CD4-positive, alpha-beta memory T cell (primary cell): ENCODE measurements at regions of chr5 and their contacts with region 1.

Region 1: DNA sequence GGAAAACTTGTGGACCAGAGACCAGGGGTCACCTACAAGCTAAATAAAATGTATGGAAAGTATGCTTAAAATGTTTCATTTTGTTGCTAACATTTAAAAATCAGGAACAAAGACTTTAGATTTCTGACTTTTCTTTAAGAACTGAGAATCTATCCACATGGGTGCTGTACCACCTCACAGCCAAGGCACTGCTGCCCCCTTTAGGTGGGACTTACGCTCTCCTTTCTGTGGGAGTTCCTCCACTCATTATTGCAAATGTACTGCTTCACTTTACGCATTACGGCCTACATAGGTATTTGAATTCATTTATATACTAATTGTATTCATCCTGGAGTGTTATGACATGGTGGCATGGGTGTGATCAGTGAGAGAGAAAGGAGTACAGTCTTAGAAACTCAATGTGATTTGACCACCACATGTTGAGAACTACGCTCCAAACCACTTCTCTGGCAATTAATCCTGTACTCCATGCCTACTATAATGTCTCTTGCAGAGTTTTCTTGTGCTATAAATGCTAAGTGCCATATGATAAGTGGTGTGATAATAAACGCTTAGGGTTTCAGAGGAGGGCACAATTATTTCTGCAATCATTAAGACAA is 24.7 kb upstream of the CETN3 start:
- DNase-seq: peak in 4 of 5 donors; percentile 19 to 26 (median 22)
- H3K4me3 ChIP-seq: no peak overlapping the region
- H3K4me3 Mint-ChIP-seq: no peak overlapping the region
- H3K27ac ChIP-seq: no peak overlapping the region
- H3K27ac Mint-ChIP-seq: no peak overlapping the region
- H3K4me1 ChIP-seq: no peaks in the 10 kb centered on the region
- H3K4me1 Mint-ChIP-seq: no peaks in the 10 kb centered on the region
- H3K27me3 ChIP-seq: no peaks in the 10 kb centered on the region
- H3K27me3 Mint-ChIP-seq: peaks cover 7% of the 10 kb centered on the region in 2 donors

Region 2: DNA sequence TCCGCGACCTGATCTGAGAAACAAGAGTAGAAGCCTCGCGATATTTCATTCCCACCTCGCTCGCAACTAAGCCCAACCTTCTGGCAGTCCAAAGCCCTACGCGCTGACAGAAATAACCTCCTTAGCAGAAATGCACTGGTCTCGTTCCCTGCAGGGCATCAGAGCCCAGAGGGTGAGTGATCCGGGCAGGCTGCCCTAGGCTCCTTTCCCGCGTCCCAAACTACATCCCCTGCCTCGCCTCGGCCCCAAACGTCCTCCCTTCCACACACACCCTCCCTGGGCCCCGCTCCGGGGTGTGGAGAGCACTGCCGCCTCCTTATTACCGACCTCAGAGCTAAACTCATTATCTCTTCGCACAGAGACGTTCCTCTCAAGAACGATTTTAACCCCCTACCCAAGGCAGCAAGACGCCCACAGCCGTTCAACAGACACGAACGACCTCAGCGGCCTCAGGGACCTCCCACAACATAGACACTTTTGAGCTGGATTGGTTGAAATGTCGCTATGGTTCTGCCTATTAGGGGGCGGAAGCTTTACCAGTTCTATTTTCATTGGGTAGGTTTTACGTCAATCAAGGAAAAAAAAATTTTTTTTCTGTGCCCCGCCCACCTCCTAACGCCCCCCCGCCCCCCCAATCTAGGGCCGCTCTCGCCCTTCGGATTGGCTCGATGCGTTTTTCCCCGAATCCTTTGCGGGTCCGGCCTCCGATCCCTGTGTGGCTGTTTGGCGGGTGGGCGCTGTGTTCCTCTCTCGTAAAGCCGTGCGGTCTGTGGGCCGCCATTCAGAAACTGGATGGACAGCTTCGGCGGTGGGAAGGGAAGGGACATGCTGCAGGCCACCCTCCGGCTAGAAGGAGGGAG is 24.7 kb before region 1 on chr5 and contains the start of gene CETN3:
- CTCF ChIA-PET with region 1: interaction called, 6 read pairs
- POLR2A ChIA-PET with region 1: interaction called, 7 read pairs
- intact Hi-C with region 1: loop called (anchors 1 kb)
- DNase-seq: peak; percentile 89 to 91 (median 91)
- H3K4me3 ChIP-seq: peak within 1 kb of the TSS; percentile 90 to 99
- H3K4me3 Mint-ChIP-seq: no peak within 1 kb of the TSS
- H3K27ac ChIP-seq: peak within 1 kb of the TSS; percentile 89
- H3K27ac Mint-ChIP-seq: no peak within 1 kb of the TSS
- H3K4me1 ChIP-seq: peaks cover 20% of the 10 kb centered on the region
- H3K4me1 Mint-ChIP-seq: peaks cover 11 to 17% (median 12%) of the 10 kb centered on the region in 4 donors
- H3K27me3 ChIP-seq: no peaks in the 10 kb centered on the region
- H3K27me3 Mint-ChIP-seq: no peaks in the 10 kb centered on the region
- total RNA-seq, gene CETN3: 15.9 to 22.1 TPM

Region 3: GRCh38 chr5:90474235-90475109 is 40.3 kb after region 1 on chr5 and contains the starts of genes MBLAC2 and POLR3G:
- CTCF ChIA-PET with region 1: interaction called, 33 read pairs
- POLR2A ChIA-PET with region 1: no interaction called
- intact Hi-C with region 1: loop called (anchors 2 kb)
- DNase-seq: peak; percentile 91 to 93 (median 92)
- H3K4me3 ChIP-seq: peak within 1 kb of the TSS; percentile 79 to 87
- H3K4me3 Mint-ChIP-seq: peak within 1 kb of the TSS; percentile 95 to 99 (median 99)
- H3K27ac ChIP-seq: peak within 1 kb of the TSS; percentile 66
- H3K27ac Mint-ChIP-seq: peak within 1 kb of the TSS; percentile 84 to 98 (median 95)
- H3K4me1 ChIP-seq: peaks cover 35% of the 10 kb centered on the region
- H3K4me1 Mint-ChIP-seq: peaks cover 24 to 46% (median 35%) of the 10 kb centered on the region in 4 donors
- H3K27me3 ChIP-seq: no peaks in the 10 kb centered on the region
- H3K27me3 Mint-ChIP-seq: no peaks in the 10 kb centered on the region
- total RNA-seq, gene MBLAC2: 14.7 to 16.1 TPM
- total RNA-seq, gene POLR3G: 1.2 to 1.5 TPM

Region 4: GRCh38 chr5:90529194-90529938 is 95.2 kb after region 1 on chr5 and contains the start of gene LYSMD3:
- CTCF ChIA-PET with region 1: interaction called, 89 read pairs
- POLR2A ChIA-PET with region 1: interaction called, 8 read pairs
- intact Hi-C with region 1: loop called (anchors 1 kb)
- DNase-seq: peak; percentile 95 to 97 (median 96)
- H3K4me3 ChIP-seq: peak within 1 kb of the TSS; percentile 83 to 93
- H3K4me3 Mint-ChIP-seq: peak within 1 kb of the TSS; percentile 97 to 100 (median 99)
- H3K27ac ChIP-seq: peak within 1 kb of the TSS; percentile 98
- H3K27ac Mint-ChIP-seq: peak within 1 kb of the TSS; percentile 97 to 100 (median 99)
- H3K4me1 ChIP-seq: peaks cover 35% of the 10 kb centered on the region
- H3K4me1 Mint-ChIP-seq: peaks cover 25 to 42% (median 34%) of the 10 kb centered on the region in 4 donors
- H3K27me3 ChIP-seq: no peaks in the 10 kb centered on the region
- H3K27me3 Mint-ChIP-seq: peaks cover 9 to 12% of the 10 kb centered on the region in 2 donors
- total RNA-seq, gene LYSMD3: 30.1 to 30.9 TPM

Region 5: DNA sequence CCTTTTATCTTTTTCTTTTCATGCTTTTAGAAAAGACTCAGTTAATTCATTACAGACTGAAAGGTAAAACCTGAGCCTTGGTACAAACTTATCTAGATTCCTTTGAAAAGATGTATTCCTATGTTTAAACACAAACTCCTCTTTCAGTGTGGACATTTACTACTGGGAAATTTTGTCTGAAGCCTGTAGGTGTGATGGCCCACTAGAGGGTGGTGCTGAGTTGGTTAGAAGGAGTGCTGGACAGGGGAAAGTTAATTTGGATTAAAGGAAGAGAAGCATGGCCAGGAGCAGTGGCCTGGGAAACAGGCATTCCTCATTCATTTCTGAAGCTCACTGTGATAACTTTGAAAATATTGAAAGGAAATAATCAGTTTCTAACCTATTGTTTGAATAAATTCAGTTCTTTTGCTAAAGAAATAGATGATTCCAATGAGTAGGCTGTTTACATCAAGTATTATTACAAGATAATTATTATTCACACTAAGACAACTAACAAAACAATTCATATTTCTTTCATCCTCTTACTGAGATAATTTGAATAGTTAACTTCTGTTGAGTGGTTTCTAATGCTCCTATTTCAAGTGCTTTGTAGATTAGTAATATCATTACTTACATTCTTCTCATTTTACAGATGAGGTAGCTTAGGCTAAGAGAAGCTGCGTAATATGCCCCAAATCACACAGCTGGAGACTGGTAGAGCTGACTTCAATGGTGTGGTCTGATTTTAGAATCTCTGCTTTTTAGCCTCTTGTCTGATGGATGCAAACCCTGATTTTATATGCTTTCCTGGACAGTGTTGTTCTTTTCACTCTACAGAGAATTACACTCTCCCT is 275.3 kb after region 1 on chr5:
- CTCF ChIA-PET with region 1: no interaction called
- POLR2A ChIA-PET with region 1: no interaction called
- intact Hi-C with region 1: loop called (anchors 1 kb)
- DNase-seq: no peak
- H3K4me3 ChIP-seq: no peak overlapping the region
- H3K4me3 Mint-ChIP-seq: no peak overlapping the region
- H3K27ac ChIP-seq: no peak overlapping the region
- H3K27ac Mint-ChIP-seq: peak overlapping the region in 1 of 7 donors; percentile 48
- H3K4me1 ChIP-seq: no peaks in the 10 kb centered on the region
- H3K4me1 Mint-ChIP-seq: no peaks in the 10 kb centered on the region
- H3K27me3 ChIP-seq: no peaks in the 10 kb centered on the region
- H3K27me3 Mint-ChIP-seq: peaks cover 3 to 8% of the 10 kb centered on the region in 2 donors

Region 6: DNA sequence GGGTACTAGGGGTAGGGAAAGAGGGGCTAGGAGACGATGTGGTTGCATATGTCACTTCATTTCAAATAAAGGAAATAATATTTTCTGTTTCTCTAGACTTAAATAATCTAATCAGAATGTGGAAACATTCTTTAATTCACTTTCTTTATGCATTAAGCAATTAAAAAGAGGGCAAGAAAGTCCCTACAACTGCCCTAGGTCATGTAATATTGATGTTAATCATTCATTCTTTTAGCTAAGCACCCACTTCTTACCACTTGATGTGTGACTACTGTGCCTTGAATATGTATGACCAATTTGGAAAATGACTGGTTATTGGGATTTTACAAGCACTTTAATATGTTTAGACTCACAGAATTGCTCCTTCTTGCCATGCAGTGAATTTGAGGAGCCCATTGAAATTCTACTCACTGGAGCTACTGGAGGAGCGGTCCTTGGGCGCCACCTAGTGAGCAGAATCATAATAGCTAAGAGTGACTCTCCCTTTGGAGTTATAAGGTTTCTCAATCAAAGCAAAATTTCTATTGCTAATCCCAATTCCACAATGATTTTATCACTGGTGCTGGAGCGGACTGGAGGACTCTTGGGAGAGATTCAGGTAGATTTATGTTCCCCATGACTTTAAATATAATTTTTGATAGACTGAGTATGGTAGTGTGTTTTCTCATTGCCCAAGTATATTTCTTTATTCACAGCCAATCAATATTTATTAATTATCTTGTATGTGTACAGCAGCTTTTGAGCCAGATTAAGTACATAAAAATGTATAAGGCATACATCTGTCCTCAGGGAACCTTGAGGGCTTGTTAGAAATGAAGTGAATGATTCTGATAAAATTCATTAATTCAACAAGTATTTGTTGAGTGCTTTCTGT is 349.5 kb after region 1 on chr5:
- CTCF ChIA-PET with region 1: interaction called, 64 read pairs
- POLR2A ChIA-PET with region 1: no interaction called
- intact Hi-C with region 1: loop called (anchors 1 kb)
- DNase-seq: peak; percentile 48 to 62 (median 56)
- H3K4me3 ChIP-seq: no peak overlapping the region
- H3K4me3 Mint-ChIP-seq: no peak overlapping the region
- H3K27ac ChIP-seq: no peak overlapping the region
- H3K27ac Mint-ChIP-seq: no peak overlapping the region
- H3K4me1 ChIP-seq: no peaks in the 10 kb centered on the region
- H3K4me1 Mint-ChIP-seq: no peaks in the 10 kb centered on the region
- H3K27me3 ChIP-seq: no peaks in the 10 kb centered on the region
- H3K27me3 Mint-ChIP-seq: peaks cover 6 to 8% of the 10 kb centered on the region in 2 donors

Region 7: GRCh38 chr5:90940227-90940995 is 506.2 kb after region 1 on chr5:
- CTCF ChIA-PET with region 1: no interaction called
- POLR2A ChIA-PET with region 1: no interaction called
- intact Hi-C with region 1: no loop called
- DNase-seq: peak; percentile 4 to 34 (median 22)
- H3K4me3 ChIP-seq: no peak overlapping the region
- H3K4me3 Mint-ChIP-seq: no peak overlapping the region
- H3K27ac ChIP-seq: no peak overlapping the region
- H3K27ac Mint-ChIP-seq: peak overlapping the region in 2 of 7 donors; percentile 46 to 64
- H3K4me1 ChIP-seq: no peaks in the 10 kb centered on the region
- H3K4me1 Mint-ChIP-seq: peaks cover 0 to 8% (median 2%) of the 10 kb centered on the region in 4 donors
- H3K27me3 ChIP-seq: no peaks in the 10 kb centered on the region
- H3K27me3 Mint-ChIP-seq: peaks cover 0 to 1% of the 10 kb centered on the region in 2 donors

Region 8: DNA sequence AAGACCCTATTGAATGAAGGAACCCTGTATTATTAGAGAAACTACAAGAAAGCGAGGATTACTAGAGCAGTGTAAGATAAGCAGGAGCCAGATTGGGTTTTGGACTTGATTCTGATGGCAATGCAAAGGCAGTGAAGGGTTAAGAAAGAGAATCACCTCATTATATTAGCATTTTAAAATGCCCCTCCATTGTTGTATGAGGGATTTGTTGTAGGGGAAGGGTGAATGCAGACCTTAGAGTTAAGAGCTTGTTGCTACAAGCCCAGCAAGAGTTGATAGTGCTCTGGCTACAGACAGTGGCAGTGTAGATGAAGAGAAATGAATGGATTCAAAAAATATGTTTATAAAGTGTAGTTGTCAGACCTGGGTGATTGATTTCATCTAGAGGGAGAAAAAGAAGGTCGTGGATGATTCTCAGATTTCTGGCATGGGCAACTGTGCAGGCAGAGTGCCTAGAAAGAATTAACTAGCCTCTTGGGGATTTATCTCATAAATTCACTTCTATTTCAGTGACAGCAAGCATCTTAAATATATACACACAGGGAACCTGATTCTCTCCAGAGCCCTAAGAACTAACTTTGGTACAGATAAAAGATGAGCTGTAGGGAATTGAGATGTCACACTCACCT is 604.1 kb after region 1 on chr5:
- CTCF ChIA-PET with region 1: no interaction called
- POLR2A ChIA-PET with region 1: no interaction called
- intact Hi-C with region 1: no loop called
- DNase-seq: no peak
- H3K4me3 ChIP-seq: no peak overlapping the region
- H3K4me3 Mint-ChIP-seq: no peak overlapping the region
- H3K27ac ChIP-seq: no peak overlapping the region
- H3K27ac Mint-ChIP-seq: no peak overlapping the region
- H3K4me1 ChIP-seq: no peaks in the 10 kb centered on the region
- H3K4me1 Mint-ChIP-seq: no peaks in the 10 kb centered on the region
- H3K27me3 ChIP-seq: no peaks in the 10 kb centered on the region
- H3K27me3 Mint-ChIP-seq: peaks cover 4 to 5% of the 10 kb centered on the region in 2 donors